Colonic mucosa (tissue), 4 donors: ENCODE measurements at regions of chr3 and their contacts with region 1.

Region 1: DNA sequence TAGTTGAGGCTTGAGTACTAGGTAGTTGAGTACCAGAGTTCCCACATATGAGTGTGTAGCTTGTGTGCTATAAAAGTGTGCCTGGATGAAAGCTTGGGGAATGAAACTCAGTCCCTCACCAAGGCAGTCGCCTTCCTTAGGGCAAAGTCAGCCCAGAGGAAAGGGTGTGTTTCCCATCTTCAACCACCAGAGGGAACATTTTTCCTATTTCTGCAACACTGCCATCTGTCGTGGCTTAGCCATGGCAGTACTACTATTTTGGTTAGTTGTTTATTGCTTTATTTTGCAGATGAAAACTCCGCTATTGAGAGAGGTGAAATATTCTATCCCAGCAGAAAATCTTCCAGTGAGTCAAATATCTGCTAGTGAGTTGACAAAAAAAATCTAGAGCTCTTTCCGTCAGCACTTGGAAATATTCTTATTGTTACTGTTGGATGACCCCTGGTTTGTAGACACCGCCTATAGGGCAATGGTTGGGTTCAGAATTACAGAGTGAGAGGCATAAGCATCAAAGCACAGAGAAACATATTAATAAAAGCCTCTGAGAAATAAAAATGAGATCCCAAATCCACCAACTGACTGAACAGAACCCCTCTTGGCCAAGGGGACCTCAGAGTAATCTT is 239.9 kb downstream of the CPNE4 start:
- DNase-seq: peak; percentile 20
- H3K4me3 ChIP-seq: no peak overlapping the region
- H3K27ac ChIP-seq: no peak overlapping the region
- H3K4me1 ChIP-seq: no peaks in the 10 kb centered on the region
- H3K27me3 ChIP-seq: no peaks in the 10 kb centered on the region
- CTCF ChIP-seq: peak; percentile 63

Region 2: GRCh38 chr3:132029182-132029902 is 234.5 kb after region 1 on chr3:
- intact Hi-C with region 1: loop called (anchors 5 kb)
- DNase-seq: peak; percentile 78
- H3K4me3 ChIP-seq: no peak overlapping the region
- H3K27ac ChIP-seq: no peak overlapping the region
- H3K4me1 ChIP-seq: no peaks in the 10 kb centered on the region
- H3K27me3 ChIP-seq: peaks cover 17% of the 10 kb centered on the region
- CTCF ChIP-seq: peak; percentile 73